ENCODE measurements at regions of chr19 and their contacts with region 1.

Region 1: GRCh38 chr19:19531951-19532805 is 3.5 kb downstream of the YJEFN3 start:
- DNase-seq: peak; percentile 87
- ATAC-seq: peak; percentile 90
- H3K4me3 Mint-ChIP-seq: no peak overlapping the region
- H3K27ac Mint-ChIP-seq: peak overlapping the region; percentile 54
- H3K4me1 Mint-ChIP-seq: peaks cover 9% of the 10 kb centered on the region
- H3K27me3 Mint-ChIP-seq: peaks cover 3% of the 10 kb centered on the region

Region 2: DNA sequence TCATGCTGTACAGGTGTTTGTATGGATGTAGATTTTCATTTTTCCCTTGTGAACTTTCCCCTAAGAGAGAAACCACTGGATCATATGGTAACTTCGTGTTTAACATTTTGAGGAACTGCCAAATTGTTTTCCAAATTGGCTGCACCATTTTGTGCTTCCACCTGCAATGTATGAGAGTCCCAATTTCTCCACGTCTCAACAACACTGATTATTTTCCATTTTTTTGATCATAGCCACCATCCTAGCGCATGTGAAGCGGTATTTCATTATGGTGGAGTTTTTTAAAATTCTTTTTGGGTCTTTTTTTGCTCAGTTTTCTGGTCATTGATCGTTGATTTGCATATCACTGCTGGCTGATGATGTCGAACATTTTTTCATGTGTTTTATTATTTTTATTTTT is 11.2 kb before region 1 on chr19:
- CTCF ChIA-PET with region 1: interaction called, 11 read pairs
- DNase-seq: no peak
- ATAC-seq: no peak
- H3K4me3 Mint-ChIP-seq: no peak overlapping the region
- H3K27ac Mint-ChIP-seq: no peak overlapping the region
- H3K4me1 Mint-ChIP-seq: peaks cover 40% of the 10 kb centered on the region
- H3K27me3 Mint-ChIP-seq: no peaks in the 10 kb centered on the region

Region 3: GRCh38 chr19:19591133-19591825 is 59.1 kb after region 1 on chr19:
- CTCF ChIA-PET with region 1: interaction called, 15 read pairs
- DNase-seq: peak; percentile 88
- ATAC-seq: peak; percentile 91
- H3K4me3 Mint-ChIP-seq: peak overlapping the region; percentile 16
- H3K27ac Mint-ChIP-seq: peak overlapping the region; percentile 92
- H3K4me1 Mint-ChIP-seq: peaks cover 70% of the 10 kb centered on the region
- H3K27me3 Mint-ChIP-seq: no peaks in the 10 kb centered on the region

Region 4: GRCh38 chr19:19643158-19644053 is 111.2 kb after region 1 on chr19 and contains the start of gene GMIP:
- CTCF ChIA-PET with region 1: interaction called, 32 read pairs
- DNase-seq: peak; percentile 91
- ATAC-seq: peak; percentile 93
- H3K4me3 Mint-ChIP-seq: peak within 1 kb of the TSS; percentile 95
- H3K27ac Mint-ChIP-seq: peak within 1 kb of the TSS; percentile 99
- H3K4me1 Mint-ChIP-seq: peaks cover 17% of the 10 kb centered on the region
- H3K27me3 Mint-ChIP-seq: no peaks in the 10 kb centered on the region
- total RNA-seq, gene GMIP: 110 to 111 TPM

Region 5: DNA sequence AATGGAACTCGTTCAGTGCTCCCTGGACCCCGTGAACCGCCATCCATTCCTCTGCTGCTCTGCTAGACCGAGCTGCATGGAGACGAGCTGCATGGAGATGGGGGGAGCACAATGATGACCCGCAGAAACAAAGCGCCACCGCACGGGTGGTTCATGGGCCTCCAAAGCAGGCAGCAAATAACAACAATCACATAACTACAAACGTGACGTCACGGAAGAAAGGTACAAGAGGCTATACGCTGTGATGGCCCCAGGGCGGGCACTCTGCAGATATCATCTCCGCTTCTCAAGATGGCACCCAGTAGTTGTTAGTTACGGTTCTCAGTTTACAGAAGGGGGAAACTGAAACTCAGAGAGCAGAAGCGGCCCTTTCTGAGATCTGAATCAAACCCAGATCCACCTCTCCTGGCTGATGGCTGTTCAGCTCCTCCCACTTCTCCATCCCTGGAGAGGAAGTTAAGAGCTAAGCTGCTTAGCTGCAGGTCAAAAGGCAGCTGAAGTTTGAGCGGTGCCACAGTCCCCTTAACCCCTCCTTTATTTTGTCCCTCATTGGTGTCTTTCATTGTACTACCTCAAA is 129.6 kb after region 1 on chr19:
- CTCF ChIA-PET with region 1: interaction called, 23 read pairs
- DNase-seq: peak; percentile 91
- ATAC-seq: peak; percentile 54
- H3K4me3 Mint-ChIP-seq: peak overlapping the region; percentile 82
- H3K27ac Mint-ChIP-seq: peak overlapping the region; percentile 93
- H3K4me1 Mint-ChIP-seq: peaks cover 36% of the 10 kb centered on the region
- H3K27me3 Mint-ChIP-seq: no peaks in the 10 kb centered on the region